Prostate gland (tissue), 2 donors: ENCODE measurements at regions of chr1 and their contacts with region 1.

Region 1: GRCh38 chr1:1815606-1816281 is 37.5 kb upstream of the NADK start:
- DNase-seq: no peak
- H3K4me3 ChIP-seq: no peak overlapping the region
- H3K27ac ChIP-seq: no peak overlapping the region
- H3K4me1 ChIP-seq: no peaks in the 10 kb centered on the region
- H3K27me3 ChIP-seq: no peaks in the 10 kb centered on the region
- CTCF ChIP-seq: no peak
- POLR2A ChIP-seq: no peak

Region 2: GRCh38 chr1:1264868-1265272 is 550.9 kb before region 1 on chr1:
- intact Hi-C with region 1: no loop called
- DNase-seq: no peak
- H3K4me3 ChIP-seq: no peak overlapping the region
- H3K27ac ChIP-seq: no peak overlapping the region
- H3K4me1 ChIP-seq: no peaks in the 10 kb centered on the region
- H3K27me3 ChIP-seq: no peaks in the 10 kb centered on the region
- CTCF ChIP-seq: no peak
- POLR2A ChIP-seq: no peak

Region 3: DNA sequence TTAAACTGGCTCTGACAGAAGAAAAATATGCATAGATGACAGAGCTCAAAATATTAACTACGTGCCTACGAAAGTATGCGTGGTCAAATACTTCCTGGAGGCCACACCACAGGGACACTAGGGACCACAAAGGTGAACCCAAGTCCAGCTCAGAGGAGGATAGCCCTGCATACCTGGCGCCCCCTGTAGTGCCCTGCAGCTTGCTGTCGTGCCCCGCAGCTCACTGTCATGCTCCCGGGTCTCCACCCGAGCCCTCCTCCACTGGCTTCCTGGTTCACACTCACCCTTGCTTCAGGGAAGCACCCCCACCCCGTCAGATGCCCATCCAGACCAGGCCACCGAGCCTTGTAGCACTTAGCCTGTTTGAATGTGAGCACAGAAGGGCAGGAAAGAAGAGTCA is 20.7 kb before region 1 on chr1:
- intact Hi-C with region 1: loop called (anchors 2 kb)
- DNase-seq: no peak
- H3K4me3 ChIP-seq: no peak overlapping the region
- H3K27ac ChIP-seq: no peak overlapping the region
- H3K4me1 ChIP-seq: no peaks in the 10 kb centered on the region
- H3K27me3 ChIP-seq: no peaks in the 10 kb centered on the region
- CTCF ChIP-seq: no peak
- POLR2A ChIP-seq: no peak

Region 4: DNA sequence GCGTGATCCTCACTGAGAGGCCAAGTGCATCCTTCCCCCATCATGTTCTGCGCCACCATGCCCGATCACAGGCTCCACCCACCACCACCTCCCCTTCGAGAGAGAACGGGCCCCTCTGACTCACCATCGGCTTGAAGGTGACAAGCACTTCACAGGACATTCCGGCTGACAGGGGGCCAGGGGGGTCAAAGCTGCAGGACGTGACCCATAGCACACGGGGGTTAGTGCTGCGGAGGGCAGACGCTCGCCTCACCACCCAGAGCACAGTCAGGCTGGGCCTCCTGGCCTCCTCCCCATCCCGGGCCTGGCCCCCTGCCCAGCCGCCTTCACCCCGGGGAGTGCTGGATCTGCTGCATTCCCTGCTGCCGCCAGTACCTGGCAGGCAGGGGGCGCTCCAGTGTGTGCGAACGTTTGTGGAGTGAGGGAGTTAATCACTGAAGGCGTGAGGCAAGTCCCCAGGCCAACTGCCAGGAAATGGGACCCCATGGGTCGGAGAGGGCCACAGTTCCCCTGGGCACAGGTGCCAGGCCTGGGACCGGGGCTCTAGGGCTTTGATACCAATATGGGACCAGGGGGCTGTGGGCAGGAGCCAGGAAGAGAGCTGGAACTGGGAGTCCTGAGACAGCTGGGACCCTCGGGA is 144.2 kb after region 1 on chr1:
- intact Hi-C with region 1: no loop called
- DNase-seq: peak; percentile 81
- H3K4me3 ChIP-seq: no peak overlapping the region
- H3K27ac ChIP-seq: no peak overlapping the region
- H3K4me1 ChIP-seq: no peaks in the 10 kb centered on the region
- H3K27me3 ChIP-seq: no peaks in the 10 kb centered on the region
- CTCF ChIP-seq: peak; percentile 44 to 90 (median 86)
- POLR2A ChIP-seq: no peak

Region 5: GRCh38 chr1:2545759-2546514 is 730.2 kb after region 1 on chr1:
- intact Hi-C with region 1: no loop called
- DNase-seq: peak; percentile 89
- H3K4me3 ChIP-seq: peak overlapping the region; percentile 17 to 38
- H3K27ac ChIP-seq: peak overlapping the region; percentile 98 to 99
- H3K4me1 ChIP-seq: peaks cover 23% of the 10 kb centered on the region
- H3K27me3 ChIP-seq: no peaks in the 10 kb centered on the region
- CTCF ChIP-seq: no peak
- POLR2A ChIP-seq: peak; percentile 35